ENCODE measurements at regions of chr14 and their contacts with region 1.

Region 1: GRCh38 chr14:22653012-22653621 is 9.0 kb upstream of the OR6J1 start:
- DNase-seq: no peak
- H3K4me3 ChIP-seq: no peak overlapping the region
- CTCF ChIP-seq: peak; percentile 94

Region 2: GRCh38 chr14:22579236-22579635 is 73.9 kb before region 1 on chr14:
- CTCF ChIA-PET with region 1: interaction called, 299 read pairs
- POLR2A ChIA-PET with region 1: no interaction called
- DNase-seq: no peak
- H3K4me3 ChIP-seq: no peak overlapping the region
- CTCF ChIP-seq: no peak

Region 3: DNA sequence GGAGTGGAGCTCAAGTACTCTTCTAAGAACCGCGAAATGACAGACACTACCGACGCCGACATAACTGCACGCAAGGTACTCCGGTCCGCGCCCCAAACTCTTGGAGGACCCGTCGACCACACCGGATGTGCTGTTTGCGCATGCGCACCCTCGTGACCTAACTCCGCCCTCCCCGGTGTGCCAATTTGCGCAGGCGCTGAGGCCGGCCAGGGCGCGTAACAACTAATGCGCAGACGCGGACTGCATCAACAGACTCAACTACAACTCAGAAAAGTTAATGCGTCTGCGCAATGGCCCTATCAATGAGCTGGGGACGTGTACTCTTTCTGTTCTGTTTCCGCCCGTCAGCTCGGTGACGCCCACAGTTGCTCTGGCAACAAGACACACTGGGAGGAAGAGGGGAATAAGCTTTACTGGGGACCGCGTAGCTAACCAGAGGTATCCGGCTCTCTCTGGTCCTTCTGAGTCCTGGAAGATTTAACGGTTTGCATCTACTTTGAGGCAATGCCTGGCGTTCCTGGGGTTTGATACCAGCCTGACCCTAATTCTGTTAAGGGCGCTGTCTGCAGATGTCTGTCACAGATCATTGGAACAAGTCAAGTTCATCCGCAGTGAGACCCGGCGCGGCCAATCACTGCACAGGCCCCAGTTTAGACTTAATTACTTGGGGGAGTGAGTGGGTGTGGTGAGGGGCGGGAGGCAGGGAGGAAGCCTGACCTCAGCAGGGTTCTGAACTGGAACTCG is 63.8 kb before region 1 on chr14 and contains the start of gene DAD1:
- CTCF ChIA-PET with region 1: interaction called, 79 read pairs
- POLR2A ChIA-PET with region 1: interaction called, 4 read pairs
- DNase-seq: peak; percentile 97
- H3K4me3 ChIP-seq: peak within 1 kb of the TSS; percentile 89
- CTCF ChIP-seq: no peak

Region 4: DNA sequence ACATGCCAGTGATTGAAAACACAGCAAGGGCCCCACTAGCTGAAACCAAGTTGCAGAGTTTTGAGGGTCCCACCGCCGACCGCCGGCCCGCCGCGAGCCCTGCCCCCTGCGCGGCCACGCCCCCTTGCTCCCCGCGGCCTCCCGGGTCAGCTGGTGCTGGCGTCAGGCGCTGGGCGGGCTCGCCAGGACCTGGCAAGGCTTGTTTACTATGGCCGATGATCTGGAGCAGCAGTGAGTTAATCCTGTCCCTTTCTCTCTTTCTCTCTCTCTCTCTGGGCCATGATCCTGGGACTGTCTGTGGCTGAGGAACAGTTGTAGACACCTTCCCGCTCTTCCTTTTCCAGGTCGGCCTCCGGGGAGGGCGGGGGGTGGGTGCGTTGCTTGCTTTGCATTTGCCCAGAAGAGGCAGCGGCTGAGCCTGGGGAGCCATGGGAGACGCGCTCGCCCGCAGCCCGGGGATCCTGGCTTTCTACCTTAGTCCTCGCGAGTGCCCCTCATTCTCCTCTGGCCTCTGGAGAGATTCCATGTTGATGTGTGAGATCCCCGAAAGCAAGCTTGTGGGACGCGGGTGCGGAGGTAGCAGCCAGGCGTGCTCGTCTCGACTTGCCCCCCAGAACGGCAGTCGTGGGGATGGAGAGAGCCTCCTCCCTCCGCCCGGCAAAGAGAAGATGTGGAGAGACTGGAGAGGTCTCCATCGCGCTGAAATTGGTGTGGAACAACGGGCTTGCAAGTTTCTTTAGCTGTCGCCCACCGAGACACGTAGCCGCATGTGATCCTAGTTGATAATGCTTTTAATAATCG is 54.8 kb before region 1 on chr14 and contains the start of gene ABHD4:
- CTCF ChIA-PET with region 1: interaction called, 79 read pairs
- POLR2A ChIA-PET with region 1: interaction called, 3 read pairs
- DNase-seq: no peak
- H3K4me3 ChIP-seq: peak within 1 kb of the TSS; percentile 92
- CTCF ChIP-seq: no peak

Region 5: DNA sequence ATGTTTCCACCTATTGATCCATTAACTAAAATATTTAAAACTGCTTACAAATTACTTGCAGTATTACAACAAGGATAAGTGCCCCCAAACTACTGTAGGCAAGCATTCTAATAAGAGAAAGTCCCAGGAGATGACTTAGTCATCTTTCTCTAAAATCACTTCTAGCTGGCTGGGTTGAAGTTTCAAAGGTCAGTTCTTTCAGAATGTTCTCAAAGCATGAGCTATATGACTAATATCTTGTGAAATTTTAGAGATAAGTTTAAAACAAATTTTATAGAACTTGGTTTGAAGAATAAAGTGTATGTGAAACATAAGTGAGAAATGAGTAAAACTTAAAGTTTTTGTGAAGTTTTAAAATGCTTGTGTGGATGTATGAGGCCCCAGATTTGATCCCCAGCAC is 15.3 kb after region 1 on chr14:
- CTCF ChIA-PET with region 1: interaction called, 28 read pairs
- POLR2A ChIA-PET with region 1: no interaction called
- DNase-seq: no peak
- H3K4me3 ChIP-seq: no peak overlapping the region
- CTCF ChIP-seq: no peak

Region 6: DNA sequence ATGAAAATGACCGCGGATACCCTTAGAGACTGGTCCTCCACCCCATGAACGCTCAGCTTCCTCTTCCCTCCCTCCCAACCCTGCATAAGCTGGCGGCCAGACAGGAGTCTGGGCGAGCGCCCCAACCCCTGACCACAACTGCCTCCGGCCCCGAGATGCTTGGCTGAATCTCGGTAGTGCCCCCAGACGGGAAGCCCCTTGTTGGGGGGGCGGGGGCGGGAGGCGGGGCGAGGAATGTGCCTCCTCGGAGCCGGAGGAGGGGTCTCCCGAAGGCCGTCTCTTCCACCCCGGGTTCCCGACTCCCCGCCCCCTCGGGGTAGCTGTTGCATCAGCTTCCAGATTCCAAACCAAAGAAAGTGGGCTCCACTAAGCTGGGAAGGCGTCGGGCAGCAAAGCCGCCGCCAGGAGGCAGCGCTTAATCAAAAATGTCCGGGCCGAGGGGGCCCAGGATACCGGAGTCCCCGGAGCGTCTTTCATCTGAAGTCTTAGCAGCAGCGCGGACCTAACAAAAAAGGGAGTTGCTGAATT is 169.5 kb after region 1 on chr14:
- CTCF ChIA-PET with region 1: interaction called, 10 read pairs
- POLR2A ChIA-PET with region 1: no interaction called
- DNase-seq: no peak
- H3K4me3 ChIP-seq: peak overlapping the region; percentile 24
- CTCF ChIP-seq: peak; percentile 78